K562 (cell line): ENCODE measurements at regions of chr12 and their contacts with region 1.

Region 1: GRCh38 chr12:4857472-4858291 is 52.0 kb upstream of the KCNA1 start:
- DNase-seq: peak; percentile 53 to 55 (median 54)
- ATAC-seq: peak; percentile 90
- H3K4me3 ChIP-seq: no peak overlapping the region
- H3K27ac ChIP-seq: no peak overlapping the region
- H3K4me1 ChIP-seq: no peaks in the 10 kb centered on the region; a peak in 1 of 5 replicates
- H3K27me3 ChIP-seq: peaks cover 2 to 18% of the 10 kb centered on the region in 2 experiments; a peak in 3 of 5 replicates
- CTCF ChIP-seq: peak; percentile 67 to 78 (median 70)
- EP300 ChIP-seq: no peak
- POLR2A ChIP-seq: no peak
- RAD21 ChIP-seq: peak; percentile 22 to 52; a peak in 2 of 4 replicates

Region 2: DNA sequence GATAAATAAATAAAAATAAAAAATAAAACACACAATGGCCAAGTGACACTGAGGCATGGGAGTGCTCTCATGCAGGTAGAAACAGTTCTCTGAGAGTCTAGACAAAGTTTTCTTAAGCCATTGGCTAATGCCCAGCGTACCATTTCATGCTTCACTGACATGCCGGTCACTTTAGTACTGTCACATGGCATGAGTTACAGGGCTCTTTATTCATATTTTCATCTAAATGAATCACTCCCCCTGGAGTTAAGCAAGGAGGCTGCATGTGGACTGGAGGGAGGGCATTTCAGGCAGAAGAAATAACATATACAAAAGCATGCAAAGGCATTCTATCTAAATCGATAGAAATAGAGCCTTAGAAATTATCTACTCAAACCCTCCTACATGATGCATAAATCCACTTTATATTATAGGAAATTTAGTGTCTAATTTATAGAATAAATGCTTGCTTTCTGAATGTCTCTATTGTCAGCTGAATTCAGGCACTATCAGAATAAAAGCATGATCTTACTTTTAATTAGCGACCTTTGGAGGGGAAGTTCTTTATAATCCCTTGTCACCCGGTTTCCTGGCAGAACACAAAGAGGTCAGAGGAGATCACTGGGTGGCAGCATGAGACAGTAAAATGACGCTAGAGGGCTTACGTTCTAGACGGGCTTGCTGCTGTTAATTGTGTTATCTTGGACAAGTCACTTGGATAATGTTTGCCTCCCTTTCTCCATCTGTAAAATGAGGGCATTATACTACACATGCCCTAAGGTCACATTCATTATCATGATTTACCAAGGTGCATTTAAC is 278.2 kb before region 1 on chr12:
- CTCF ChIA-PET with region 1: no interaction called
- POLR2A ChIA-PET with region 1: no interaction called
- in situ Hi-C with region 1: no loop called
- intact Hi-C with region 1: loop called (anchors 2 kb)
- DNase-seq: peak in 3 of 4 experiments; percentile 7 to 44 (median 31)
- ATAC-seq: peak; percentile 69
- H3K4me3 ChIP-seq: no peak overlapping the region
- H3K27ac ChIP-seq: no peak overlapping the region
- H3K4me1 ChIP-seq: no peaks in the 10 kb centered on the region
- H3K27me3 ChIP-seq: peaks cover 2 to 24% of the 10 kb centered on the region in 2 experiments; a peak in 3 of 5 replicates
- CTCF ChIP-seq: peak; percentile 34 to 62 (median 38); a peak in 4 of 6 replicates
- EP300 ChIP-seq: no peak
- POLR2A ChIP-seq: no peak
- RAD21 ChIP-seq: peak; percentile 36 to 68

Region 3: GRCh38 chr12:5003020-5003666 is 145.5 kb after region 1 on chr12:
- CTCF ChIA-PET with region 1: interaction called, 3 read pairs
- POLR2A ChIA-PET with region 1: no interaction called
- in situ Hi-C with region 1: no loop called
- intact Hi-C with region 1: loop called (anchors 2 kb)
- DNase-seq: peak; percentile 30 to 41 (median 40)
- ATAC-seq: peak; percentile 70
- H3K4me3 ChIP-seq: no peak overlapping the region
- H3K27ac ChIP-seq: no peak overlapping the region
- H3K4me1 ChIP-seq: no peaks in the 10 kb centered on the region
- H3K27me3 ChIP-seq: no peaks in the 10 kb centered on the region
- CTCF ChIP-seq: peak; percentile 68 to 76 (median 76)
- EP300 ChIP-seq: no peak
- POLR2A ChIP-seq: no peak
- RAD21 ChIP-seq: peak; percentile 58 to 79

Region 4: GRCh38 chr12:5083955-5084849 is 226.5 kb after region 1 on chr12:
- CTCF ChIA-PET with region 1: interaction called, 5 read pairs
- POLR2A ChIA-PET with region 1: no interaction called
- in situ Hi-C with region 1: no loop called
- intact Hi-C with region 1: loop called (anchors 5 kb)
- DNase-seq: peak; percentile 39 to 47 (median 44)
- ATAC-seq: no peak
- H3K4me3 ChIP-seq: no peak overlapping the region
- H3K27ac ChIP-seq: no peak overlapping the region
- H3K4me1 ChIP-seq: no peaks in the 10 kb centered on the region; a peak in 1 of 5 replicates
- H3K27me3 ChIP-seq: peaks cover 0 to 20% of the 10 kb centered on the region in 2 experiments; a peak in 1 of 5 replicates
- CTCF ChIP-seq: peak; percentile 50 to 65 (median 54); a peak in 5 of 6 replicates
- EP300 ChIP-seq: no peak
- POLR2A ChIP-seq: no peak
- RAD21 ChIP-seq: peak in 1 of 2 experiments; percentile 61; a peak in 2 of 4 replicates